Aorta (tissue), 5 donors: ENCODE measurements at regions of chr1 and their contacts with region 1.

Region 1: GRCh38 chr1:32933742-32934322 is 30.8 kb downstream of the RNF19B start:
- DNase-seq: no peak
- ATAC-seq: peak; percentile 40
- H3K4me3 ChIP-seq: no peak overlapping the region
- H3K27ac ChIP-seq: no peak overlapping the region
- H3K4me1 ChIP-seq: no peaks in the 10 kb centered on the region
- H3K27me3 ChIP-seq: no peaks in the 10 kb centered on the region

Region 2: GRCh38 chr1:33007190-33008050 is 73.6 kb after region 1 on chr1:
- intact Hi-C with region 1: loop called (anchors 2 to 5 kb)
- DNase-seq: peak in 1 of 2 donors; percentile 67
- ATAC-seq: peak; percentile 76
- H3K4me3 ChIP-seq: no peak overlapping the region
- H3K27ac ChIP-seq: no peak overlapping the region
- H3K4me1 ChIP-seq: peaks cover 0 to 8% of the 10 kb centered on the region in 2 donors
- H3K27me3 ChIP-seq: no peaks in the 10 kb centered on the region

Region 3: DNA sequence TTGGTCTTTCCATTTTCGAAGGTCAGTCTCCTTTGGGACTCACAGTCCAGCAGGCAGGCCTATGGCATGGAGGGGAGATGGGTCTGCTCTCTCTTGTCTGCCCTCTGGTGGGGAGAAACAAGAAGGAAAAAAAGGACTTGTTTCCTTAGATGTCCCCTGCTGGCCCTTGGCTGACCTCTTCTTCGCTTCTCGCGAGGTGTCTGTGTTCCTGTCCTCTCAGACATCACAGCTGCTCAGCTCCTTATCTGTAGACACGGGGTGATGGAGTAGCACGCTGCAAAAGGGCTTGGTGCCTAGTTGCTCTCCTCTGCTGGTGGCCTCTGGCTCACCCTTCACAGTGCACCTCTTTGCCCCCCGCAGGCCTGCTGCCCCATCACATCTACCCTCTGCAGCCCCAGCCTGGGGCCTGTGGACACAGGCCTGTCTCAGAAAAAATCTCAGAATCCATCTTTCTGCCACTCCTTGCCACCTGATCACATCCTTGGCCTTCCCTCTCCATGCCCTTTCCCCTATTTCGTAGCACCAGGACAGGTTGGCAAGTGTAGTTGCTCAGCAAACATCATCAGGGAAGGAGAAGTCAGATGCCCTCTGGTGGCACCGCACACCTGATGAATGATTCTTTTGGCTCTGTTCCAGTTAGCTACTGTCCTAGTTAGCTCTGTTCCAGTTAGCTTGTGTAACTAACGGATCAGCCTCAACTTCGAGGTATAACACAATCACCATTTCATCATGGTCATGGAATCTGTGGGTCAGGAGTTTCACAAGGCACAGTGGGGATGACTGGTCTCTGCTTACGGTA is 121.6 kb after region 1 on chr1:
- intact Hi-C with region 1: loop called (anchors 2 kb)
- DNase-seq: peak; percentile 78 to 82
- ATAC-seq: peak; percentile 93
- H3K4me3 ChIP-seq: no peak overlapping the region
- H3K27ac ChIP-seq: no peak overlapping the region
- H3K4me1 ChIP-seq: no peaks in the 10 kb centered on the region
- H3K27me3 ChIP-seq: no peaks in the 10 kb centered on the region

Region 4: DNA sequence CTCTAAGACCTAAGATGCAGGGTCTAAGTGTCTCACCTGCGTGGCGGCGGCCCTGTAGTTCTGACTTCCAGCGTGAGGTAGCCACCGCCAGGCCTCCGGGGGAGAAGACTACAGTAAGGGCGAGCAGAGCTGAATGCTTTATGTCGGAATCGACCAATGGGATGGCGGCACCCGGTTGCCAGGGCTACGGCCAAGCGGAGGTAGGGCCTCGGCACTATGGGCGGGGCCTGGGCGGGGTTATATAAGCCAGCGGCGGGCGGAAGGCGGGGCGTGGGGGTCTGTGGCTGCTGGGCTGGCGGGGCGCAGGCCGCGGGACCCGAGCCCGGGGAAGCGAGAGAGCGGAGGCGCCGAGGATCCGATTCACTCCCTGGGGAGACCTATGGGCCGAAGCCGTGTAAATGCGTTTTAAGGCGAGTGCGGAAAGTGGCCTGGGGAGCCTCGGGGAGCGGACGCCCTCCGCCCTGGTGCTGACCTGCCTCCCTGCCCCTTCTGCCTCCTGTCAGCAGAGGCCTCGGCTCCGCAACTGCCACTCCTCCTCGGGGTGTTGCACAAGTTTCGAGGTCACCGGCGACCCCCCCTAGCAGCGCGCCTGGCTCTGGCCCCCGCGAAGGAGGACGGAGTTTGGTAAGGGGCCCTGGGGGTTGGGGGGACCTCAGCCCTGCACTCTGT is 147.2 kb after region 1 on chr1 and contains the start of gene AZIN2:
- intact Hi-C with region 1: loop called (anchors 5 to 10 kb)
- DNase-seq: peak; percentile 98 to 100
- ATAC-seq: peak; percentile 98
- H3K4me3 ChIP-seq: peak within 1 kb of the TSS; percentile 46 to 51
- H3K27ac ChIP-seq: no peak within 1 kb of the TSS
- H3K4me1 ChIP-seq: no peaks in the 10 kb centered on the region
- H3K27me3 ChIP-seq: no peaks in the 10 kb centered on the region
- total RNA-seq, gene AZIN2: 3.9 to 14.4 TPM